ENCODE measurements at regions of chr16 and their contacts with region 1.

Region 1: GRCh38 chr16:56708525-56709442 is 21.1 kb upstream of the NUP93 start:
- DNase-seq: peak in 1 of 10 donors; percentile 64

Region 2: GRCh38 chr16:55711959-55712876 is 996.6 kb before region 1 on chr16:
- intact Hi-C with region 1: loop called (anchors 10 kb)
- DNase-seq: peak in 8 of 10 donors; percentile 63 to 91 (median 76)

Region 3: GRCh38 chr16:56332464-56333079 is 376.2 kb before region 1 on chr16:
- intact Hi-C with region 1: loop called (anchors 10 kb)
- DNase-seq: peak in 8 of 10 donors; percentile 48 to 95 (median 72)

Region 4: DNA sequence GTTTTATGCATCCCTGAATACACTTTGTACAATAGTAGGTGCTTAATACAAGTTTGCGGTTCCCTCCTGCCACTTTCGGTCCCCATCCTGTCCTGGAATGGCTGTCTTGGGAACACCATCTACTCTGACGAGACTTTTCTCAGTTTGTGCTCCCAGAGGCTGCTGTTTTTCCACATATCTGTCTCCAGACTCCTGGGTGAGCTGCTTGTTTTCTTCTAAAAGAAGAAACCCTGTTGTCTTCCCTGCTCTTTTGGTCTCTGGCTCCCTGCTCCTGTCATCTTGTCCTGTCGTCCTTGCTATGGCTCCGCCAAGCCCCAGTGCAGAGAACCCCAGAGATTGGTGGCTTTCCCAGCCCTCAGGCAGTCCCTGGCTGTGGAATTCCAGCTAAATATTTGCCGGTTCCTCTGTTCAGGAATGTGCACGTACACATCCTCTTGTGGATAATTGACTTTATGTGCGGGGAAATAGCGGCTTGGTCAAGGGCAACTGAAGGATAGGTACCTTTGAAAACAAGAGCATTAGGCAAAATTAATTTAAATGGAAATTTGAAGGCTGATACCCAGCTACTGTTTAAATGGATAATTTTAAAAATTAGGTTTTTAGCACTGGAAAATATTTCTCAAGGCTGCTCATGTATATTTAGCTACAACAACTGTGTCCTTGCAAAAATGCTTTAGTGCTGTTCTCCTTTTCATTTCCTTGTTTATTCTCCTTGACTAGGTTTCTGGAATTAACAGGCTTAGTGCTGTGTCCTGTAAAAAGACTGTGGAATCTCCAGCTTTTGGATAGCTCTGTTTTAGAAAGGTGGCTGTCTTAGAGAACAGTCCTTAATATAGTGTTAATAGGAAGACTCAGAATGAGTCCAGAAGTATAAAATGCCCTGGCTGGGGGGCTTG is 106.0 kb after region 1 on chr16:
- intact Hi-C with region 1: no loop called
- DNase-seq: no peak

Measured in posterior cingulate gyrus (tissue), 11 donors.